ENCODE measurements at regions of chr2 and their contacts with region 1.

Region 1: GRCh38 chr2:240704651-240705050 is 13.0 kb downstream of the AQP12A start:
- DNase-seq: no peak
- H3K4me3 ChIP-seq: no peak overlapping the region
- H3K4me3 Mint-ChIP-seq: no peak overlapping the region
- H3K27ac Mint-ChIP-seq: no peak overlapping the region
- H3K4me1 ChIP-seq: no peaks in the 10 kb centered on the region
- H3K4me1 Mint-ChIP-seq: no peaks in the 10 kb centered on the region
- H3K27me3 ChIP-seq: no peaks in the 10 kb centered on the region; the same call in 1 of the 2 replicates
- H3K27me3 Mint-ChIP-seq: peaks cover 9% of the 10 kb centered on the region
- CTCF ChIP-seq: no peak

Region 2: DNA sequence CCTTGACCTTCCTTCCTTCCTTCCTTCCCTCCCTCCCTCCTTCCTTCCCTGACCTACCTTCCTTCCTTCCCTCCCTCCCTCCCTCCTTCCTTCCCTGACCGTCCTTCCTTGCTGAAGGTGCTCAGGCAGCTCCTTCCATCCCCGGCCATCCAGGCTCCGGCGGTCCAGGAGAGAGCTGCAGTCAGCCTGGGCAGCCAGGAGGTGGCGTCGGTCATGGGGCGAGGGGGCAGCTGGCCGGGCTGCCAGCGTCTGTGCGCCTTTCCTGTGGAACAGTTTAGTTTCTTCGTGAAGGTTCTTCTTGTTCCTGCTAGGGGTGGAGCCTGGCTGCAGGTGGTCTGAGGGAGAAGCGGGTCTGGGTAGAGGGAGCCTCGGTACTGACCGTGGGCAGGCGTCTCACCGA is 63.7 kb before region 1 on chr2:
- CTCF ChIA-PET with region 1: no interaction called
- POLR2A ChIA-PET with region 1: no interaction called
- intact Hi-C with region 1: loop called (anchors 10 kb)
- DNase-seq: peak in 1 of 2 experiments; percentile 54
- H3K4me3 ChIP-seq: no peak overlapping the region
- H3K4me3 Mint-ChIP-seq: no peak overlapping the region
- H3K27ac Mint-ChIP-seq: no peak overlapping the region
- H3K4me1 ChIP-seq: no peaks in the 10 kb centered on the region
- H3K4me1 Mint-ChIP-seq: no peaks in the 10 kb centered on the region
- H3K27me3 ChIP-seq: no peaks in the 10 kb centered on the region
- H3K27me3 Mint-ChIP-seq: peaks cover 6% of the 10 kb centered on the region
- CTCF ChIP-seq: peak in 1 of 2 experiments; percentile 70